Endothelial cell of umbilical vein (primary cell): ENCODE measurements at regions of chr5 and their contacts with region 1.

Region 1: GRCh38 chr5:134041570-134042411 is 37.0 kb upstream of the VDAC1 start:
- DNase-seq: no peak
- H3K4me3 ChIP-seq: no peak overlapping the region
- H3K27ac ChIP-seq: no peak overlapping the region
- H3K4me1 ChIP-seq: no peaks in the 10 kb centered on the region
- H3K27me3 ChIP-seq: no peaks in the 10 kb centered on the region
- CTCF ChIP-seq: no peak
- POLR2A ChIP-seq: no peak

Region 2: DNA sequence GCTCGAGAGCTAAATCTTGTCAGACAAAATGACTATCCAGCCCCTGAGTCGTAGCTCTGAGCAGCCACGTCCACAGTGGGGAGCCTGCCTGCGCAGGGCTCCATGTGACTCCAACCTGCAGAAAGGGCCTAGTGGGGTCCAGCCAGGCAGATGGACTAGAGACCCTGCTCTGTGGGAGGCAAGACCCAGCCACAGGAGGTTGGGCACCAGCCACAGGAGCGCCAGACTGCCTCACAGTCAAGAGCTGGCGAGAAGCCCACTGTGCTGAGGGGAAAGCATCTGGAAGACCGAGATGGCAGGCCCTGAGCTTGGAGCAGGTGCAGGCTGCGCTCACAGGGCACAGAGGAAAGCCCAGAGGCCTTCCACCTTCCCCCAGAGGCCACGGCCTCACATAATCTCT is 134.7 kb before region 1 on chr5:
- CTCF ChIA-PET with region 1: no interaction called
- POLR2A ChIA-PET with region 1: no interaction called
- dilution Hi-C with region 1: no loop called
- intact Hi-C with region 1: no loop called
- DNase-seq: no peak
- H3K4me3 ChIP-seq: no peak overlapping the region
- H3K27ac ChIP-seq: no peak overlapping the region
- H3K4me1 ChIP-seq: no peaks in the 10 kb centered on the region
- H3K27me3 ChIP-seq: no peaks in the 10 kb centered on the region
- CTCF ChIP-seq: no peak
- POLR2A ChIP-seq: no peak

Region 3: DNA sequence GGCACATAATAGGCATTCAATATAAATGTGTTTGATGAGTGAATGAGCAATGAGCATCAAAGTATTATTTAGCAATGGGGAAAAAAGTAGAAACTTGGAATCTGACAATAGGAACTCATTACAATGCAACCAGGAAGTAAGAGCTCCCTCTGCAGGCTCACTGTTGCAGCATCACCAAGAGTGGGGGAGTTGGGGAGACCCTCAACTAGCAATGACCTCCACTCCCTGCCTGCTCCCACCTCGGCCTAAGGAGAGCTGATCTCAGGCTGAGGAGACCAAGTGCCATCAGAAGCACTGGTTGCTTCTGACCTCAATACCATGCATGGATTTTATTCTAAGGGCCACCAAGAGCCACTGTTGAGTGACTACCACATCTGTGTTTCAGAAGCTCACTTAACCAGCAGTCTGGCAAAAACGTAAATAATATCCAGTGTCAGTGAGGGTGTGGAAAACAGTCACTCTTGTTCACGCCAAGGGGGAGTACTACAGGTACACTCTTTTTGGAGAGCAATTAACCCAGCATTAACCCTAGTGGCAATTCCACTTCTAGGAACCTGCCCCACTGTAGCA is 45.0 kb before region 1 on chr5:
- CTCF ChIA-PET with region 1: interaction called, 22 read pairs
- POLR2A ChIA-PET with region 1: interaction called, 3 read pairs
- dilution Hi-C with region 1: no loop called
- intact Hi-C with region 1: no loop called
- DNase-seq: no peak
- H3K4me3 ChIP-seq: no peak overlapping the region
- H3K27ac ChIP-seq: no peak overlapping the region
- H3K4me1 ChIP-seq: peaks cover 20% of the 10 kb centered on the region
- H3K27me3 ChIP-seq: no peaks in the 10 kb centered on the region
- CTCF ChIP-seq: peak; percentile 53 to 57
- POLR2A ChIP-seq: no peak

Region 4: GRCh38 chr5:134026521-134027268 is 15.1 kb before region 1 on chr5:
- CTCF ChIA-PET with region 1: interaction called, 145 read pairs
- POLR2A ChIA-PET with region 1: no interaction called
- dilution Hi-C with region 1: no loop called
- intact Hi-C with region 1: no loop called
- DNase-seq: peak; percentile 44
- H3K4me3 ChIP-seq: no peak overlapping the region
- H3K27ac ChIP-seq: no peak overlapping the region
- H3K4me1 ChIP-seq: no peaks in the 10 kb centered on the region
- H3K27me3 ChIP-seq: no peaks in the 10 kb centered on the region
- CTCF ChIP-seq: peak; percentile 55 to 70
- POLR2A ChIP-seq: no peak

Region 5: DNA sequence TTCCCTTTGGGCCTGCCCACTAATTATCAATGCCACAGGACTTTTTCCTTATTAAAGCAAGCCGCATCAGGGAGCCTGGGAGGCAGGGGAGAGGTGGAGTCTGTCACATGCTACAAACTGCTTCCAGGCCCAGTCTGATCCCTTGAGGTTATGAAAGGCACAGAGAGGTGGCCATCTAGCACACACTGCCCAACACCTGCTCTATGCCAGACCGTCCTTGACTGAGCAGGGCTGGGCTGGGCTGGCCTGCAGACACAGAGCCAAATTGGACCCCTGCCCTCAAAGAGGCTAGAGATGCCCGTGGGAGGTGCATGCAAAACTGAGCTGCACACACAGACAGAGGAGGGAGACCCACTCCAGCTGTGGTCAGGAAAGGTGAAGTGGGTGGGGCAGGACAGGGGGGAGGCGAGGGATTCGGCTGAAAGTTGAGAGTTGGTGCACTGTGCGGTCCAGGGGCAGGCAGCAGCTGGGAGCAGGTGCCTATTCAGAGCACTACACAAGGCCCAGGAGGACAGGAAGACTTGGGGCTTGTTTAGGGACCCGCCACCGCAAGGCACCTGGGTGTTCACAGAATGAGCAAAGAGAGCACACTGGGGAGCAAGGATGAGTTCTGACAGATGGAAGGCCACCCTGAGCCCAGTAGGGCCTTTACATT is 36.3 kb after region 1 on chr5:
- CTCF ChIA-PET with region 1: interaction called, 24 read pairs
- POLR2A ChIA-PET with region 1: no interaction called
- dilution Hi-C with region 1: no loop called
- intact Hi-C with region 1: no loop called
- DNase-seq: no peak
- H3K4me3 ChIP-seq: no peak overlapping the region
- H3K27ac ChIP-seq: no peak overlapping the region
- H3K4me1 ChIP-seq: no peaks in the 10 kb centered on the region
- H3K27me3 ChIP-seq: peaks cover 2 to 5% of the 10 kb centered on the region in 2 experiments
- CTCF ChIP-seq: no peak
- POLR2A ChIP-seq: no peak

Region 6: GRCh38 chr5:134101686-134102439 is 60.1 kb after region 1 on chr5:
- CTCF ChIA-PET with region 1: interaction called, 64 read pairs
- POLR2A ChIA-PET with region 1: no interaction called
- dilution Hi-C with region 1: no loop called
- intact Hi-C with region 1: loop called (anchors 2 kb)
- DNase-seq: peak; percentile 48
- H3K4me3 ChIP-seq: no peak overlapping the region
- H3K27ac ChIP-seq: no peak overlapping the region
- H3K4me1 ChIP-seq: no peaks in the 10 kb centered on the region
- H3K27me3 ChIP-seq: peaks cover 0 to under 1% of the 10 kb centered on the region in 2 experiments
- CTCF ChIP-seq: peak; percentile 85 to 97
- POLR2A ChIP-seq: no peak

Region 7: GRCh38 chr5:134125039-134126015 is 83.5 kb after region 1 on chr5:
- CTCF ChIA-PET with region 1: interaction called, 52 read pairs
- POLR2A ChIA-PET with region 1: no interaction called
- dilution Hi-C with region 1: no loop called
- intact Hi-C with region 1: no loop called
- DNase-seq: peak; percentile 51
- H3K4me3 ChIP-seq: no peak overlapping the region
- H3K27ac ChIP-seq: no peak overlapping the region
- H3K4me1 ChIP-seq: peaks cover 9% of the 10 kb centered on the region
- H3K27me3 ChIP-seq: no peaks in the 10 kb centered on the region
- CTCF ChIP-seq: no peak
- POLR2A ChIP-seq: no peak

Region 8: GRCh38 chr5:134289509-134290113 is 247.8 kb after region 1 on chr5:
- CTCF ChIA-PET with region 1: interaction called, 28 read pairs
- POLR2A ChIA-PET with region 1: no interaction called
- dilution Hi-C with region 1: no loop called
- intact Hi-C with region 1: loop called (anchors 1 kb)
- DNase-seq: peak; percentile 79
- H3K4me3 ChIP-seq: no peak overlapping the region
- H3K27ac ChIP-seq: no peak overlapping the region
- H3K4me1 ChIP-seq: no peaks in the 10 kb centered on the region
- H3K27me3 ChIP-seq: peaks cover 3 to 4% of the 10 kb centered on the region in 2 experiments
- CTCF ChIP-seq: peak; percentile 50 to 58
- POLR2A ChIP-seq: no peak

Region 9: GRCh38 chr5:134420343-134420742 is 378.6 kb after region 1 on chr5:
- CTCF ChIA-PET with region 1: no interaction called
- POLR2A ChIA-PET with region 1: no interaction called
- dilution Hi-C with region 1: no loop called
- intact Hi-C with region 1: no loop called
- DNase-seq: no peak
- H3K4me3 ChIP-seq: no peak overlapping the region
- H3K27ac ChIP-seq: no peak overlapping the region
- H3K4me1 ChIP-seq: no peaks in the 10 kb centered on the region
- H3K27me3 ChIP-seq: no peaks in the 10 kb centered on the region
- CTCF ChIP-seq: no peak
- POLR2A ChIP-seq: no peak